ENCODE measurements at regions of chr22 and their contacts with region 1.

Region 1: DNA sequence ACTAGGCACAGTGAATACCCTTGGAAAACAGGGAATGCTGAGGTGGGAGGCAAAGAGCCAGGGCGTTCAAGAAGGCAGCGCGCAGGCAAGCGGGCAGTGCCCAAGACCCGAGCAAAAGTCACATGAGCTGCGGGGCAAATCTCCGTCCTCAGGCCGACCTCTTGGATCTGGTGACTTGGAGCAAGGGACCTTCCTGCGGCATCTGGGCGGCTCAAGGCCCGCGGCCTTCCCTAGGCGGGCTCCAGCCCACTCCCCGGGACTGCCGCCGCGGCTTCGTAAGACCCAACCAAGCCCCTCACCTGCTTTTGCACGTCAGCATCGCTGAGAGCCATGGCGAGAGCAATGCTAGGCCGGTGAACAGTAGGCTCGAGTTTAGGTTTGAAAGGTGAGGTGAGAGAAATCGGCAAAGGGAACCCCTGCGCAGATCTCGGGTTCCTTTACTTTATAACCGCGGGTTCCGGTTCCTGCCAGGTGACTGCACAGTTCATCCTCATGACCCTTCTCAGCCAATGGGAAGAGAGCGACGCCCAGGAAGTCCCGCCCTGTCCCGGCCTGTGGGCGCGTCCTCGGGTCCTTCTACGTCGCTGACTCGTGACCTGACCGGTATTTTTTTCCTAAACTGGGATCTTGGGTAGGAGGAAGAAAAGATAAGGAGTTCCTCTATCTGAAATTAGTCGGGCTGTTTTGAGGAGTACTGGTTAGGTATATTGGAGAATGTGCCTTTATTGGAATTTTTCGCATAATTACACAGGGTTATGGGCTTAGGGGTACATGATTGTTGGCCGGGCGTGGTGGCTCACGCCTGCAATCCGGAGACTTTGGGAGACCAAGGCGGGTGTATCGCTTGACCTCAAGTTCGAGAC is at the start of gene ATP6V1E1:
- DNase-seq: peak; percentile 82 to 96 (median 94)
- ATAC-seq: peak; percentile 100
- H3K4me3 ChIP-seq: peak within 1 kb of the TSS; percentile 100
- H3K4me3 Mint-ChIP-seq: peak within 1 kb of the TSS; percentile 89 to 99 (median 96)
- H3K27ac ChIP-seq: peak within 1 kb of the TSS; percentile 97
- H3K27ac Mint-ChIP-seq: peak within 1 kb of the TSS; percentile 90 to 99 (median 97)
- H3K4me1 ChIP-seq: peaks cover 13 to 14% of the 10 kb centered on the region in 2 donors
- H3K4me1 Mint-ChIP-seq: peaks cover 7 to 40% (median 31%) of the 10 kb centered on the region in 7 donors
- H3K27me3 ChIP-seq: no peaks in the 10 kb centered on the region
- H3K27me3 Mint-ChIP-seq: no peaks in the 10 kb centered on the region
- total RNA-seq, gene ATP6V1E1: 51.0 to 101 (median 80.4) TPM

Region 2: GRCh38 chr22:17158568-17159503 is 469.7 kb before region 1 on chr22 and contains the start of gene HDHD5:
- CTCF ChIA-PET with region 1: no interaction called
- POLR2A ChIA-PET with region 1: interaction called, 3 read pairs
- intact Hi-C with region 1: loop called (anchors 1 to 5 kb)
- DNase-seq: peak; percentile 71 to 87 (median 84)
- ATAC-seq: peak; percentile 96
- H3K4me3 ChIP-seq: peak within 1 kb of the TSS; percentile 79
- H3K4me3 Mint-ChIP-seq: peak within 1 kb of the TSS; percentile 80 to 91 (median 88)
- H3K27ac ChIP-seq: peak within 1 kb of the TSS; percentile 79
- H3K27ac Mint-ChIP-seq: peak within 1 kb of the TSS in 8 of 9 donors; percentile 36 to 88 (median 76)
- H3K4me1 ChIP-seq: peaks cover 18 to 26% of the 10 kb centered on the region in 2 donors
- H3K4me1 Mint-ChIP-seq: peaks cover 18 to 48% (median 36%) of the 10 kb centered on the region in 7 donors
- H3K27me3 ChIP-seq: no peaks in the 10 kb centered on the region
- H3K27me3 Mint-ChIP-seq: no peaks in the 10 kb centered on the region
- total RNA-seq, gene HDHD5: 18.8 to 50.9 (median 26.2) TPM

Region 3: GRCh38 chr22:17638432-17639246 is 10.1 kb after region 1 on chr22 and contains the start of gene BCL2L13:
- CTCF ChIA-PET with region 1: no interaction called
- POLR2A ChIA-PET with region 1: interaction called, 8 read pairs
- intact Hi-C with region 1: loop called (anchors 1 kb)
- DNase-seq: peak; percentile 77 to 91 (median 88)
- ATAC-seq: peak; percentile 96
- H3K4me3 ChIP-seq: peak within 1 kb of the TSS; percentile 73
- H3K4me3 Mint-ChIP-seq: peak within 1 kb of the TSS; percentile 87 to 95 (median 90)
- H3K27ac ChIP-seq: peak within 1 kb of the TSS; percentile 99
- H3K27ac Mint-ChIP-seq: peak within 1 kb of the TSS; percentile 92 to 99 (median 96)
- H3K4me1 ChIP-seq: peaks cover 12 to 18% of the 10 kb centered on the region in 2 donors
- H3K4me1 Mint-ChIP-seq: peaks cover 17 to 38% (median 34%) of the 10 kb centered on the region in 7 donors
- H3K27me3 ChIP-seq: no peaks in the 10 kb centered on the region
- H3K27me3 Mint-ChIP-seq: no peaks in the 10 kb centered on the region
- total RNA-seq, gene BCL2L13: 21.9 to 39.1 (median 32.8) TPM

Measured in naive thymus-derived CD4-positive, alpha-beta T cell (primary cell).